Psoas muscle (tissue), 8 donors: ENCODE measurements at regions of chr17 and their contacts with region 1.

Region 1: GRCh38 chr17:46212634-46213435 is 19.6 kb upstream of the KANSL1 start:
- DNase-seq: no peak
- ATAC-seq: peak; percentile 72 to 88 (median 80)
- H3K4me3 ChIP-seq: peak overlapping the region; percentile 7
- H3K27ac ChIP-seq: peak overlapping the region; percentile 19
- H3K4me1 ChIP-seq: peaks cover 19% of the 10 kb centered on the region
- H3K27me3 ChIP-seq: no peaks in the 10 kb centered on the region
- CTCF ChIP-seq: peak; percentile 81

Region 2: DNA sequence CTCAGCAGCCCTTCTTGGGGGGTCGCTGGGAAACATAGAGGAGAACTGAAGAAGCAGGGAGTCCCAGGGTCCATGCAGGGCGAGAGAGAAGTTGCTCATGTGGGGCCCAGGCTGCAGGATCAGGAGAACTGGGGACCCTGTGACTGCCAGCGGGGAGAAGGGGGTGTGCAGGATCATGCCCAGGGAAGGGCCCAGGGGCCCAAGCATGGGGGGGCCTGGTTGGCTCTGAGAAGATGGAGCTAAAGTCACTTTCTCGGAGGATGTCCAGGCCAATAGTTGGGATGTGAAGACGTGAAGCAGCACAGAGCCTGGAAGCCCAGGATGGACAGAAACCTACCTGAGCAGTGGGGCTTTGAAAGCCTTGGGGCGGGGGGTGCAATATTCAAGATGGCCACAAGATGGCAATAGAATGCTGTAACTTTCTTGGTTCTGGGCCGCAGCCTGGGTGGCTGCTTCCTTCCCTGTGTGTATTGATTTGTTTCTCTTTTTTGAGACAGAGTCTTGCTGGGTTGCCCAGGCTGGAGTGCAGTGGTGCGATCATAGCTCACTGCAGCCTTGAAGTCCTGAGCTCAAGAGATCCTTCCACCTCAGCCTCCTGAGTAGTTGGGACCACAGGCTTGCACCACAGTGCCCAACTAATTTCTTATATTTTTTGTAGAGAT is 210.4 kb before region 1 on chr17:
- intact Hi-C with region 1: loop called (anchors 2 kb)
- DNase-seq: peak; percentile 65 to 71
- ATAC-seq: peak; percentile 77 to 89 (median 84)
- H3K4me3 ChIP-seq: no peak overlapping the region
- H3K27ac ChIP-seq: peak overlapping the region; percentile 30
- H3K4me1 ChIP-seq: peaks cover 19% of the 10 kb centered on the region
- H3K27me3 ChIP-seq: no peaks in the 10 kb centered on the region
- CTCF ChIP-seq: peak; percentile 96

Region 3: DNA sequence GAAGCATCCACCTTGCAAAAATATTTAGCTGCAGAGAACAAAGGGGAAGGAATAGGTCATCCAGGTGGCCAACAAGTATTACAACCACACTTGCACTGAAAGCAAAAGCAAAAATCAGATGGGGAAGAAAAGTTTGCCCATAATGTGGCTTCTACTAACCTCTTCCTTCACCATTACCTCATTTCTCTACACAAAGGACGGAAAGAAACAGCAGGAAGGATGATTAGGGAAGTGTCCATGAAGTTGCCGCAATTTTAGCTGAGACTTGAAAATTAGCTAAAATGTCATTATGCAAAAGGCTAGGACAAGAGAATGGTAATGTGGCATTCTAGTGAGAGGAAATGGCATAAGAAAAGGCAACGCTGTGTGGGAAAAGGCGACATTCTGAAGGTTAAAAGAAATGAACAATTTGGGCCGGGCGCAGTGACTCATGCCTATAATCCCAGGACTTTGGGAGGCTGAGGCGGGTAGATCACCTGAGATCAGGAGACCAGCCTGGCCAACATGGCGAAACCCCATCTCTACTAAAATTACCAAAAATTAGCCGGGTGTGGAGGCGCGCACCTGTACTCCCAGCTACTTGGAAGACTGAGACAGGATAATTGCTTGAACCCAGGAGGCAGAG is 33.3 kb before region 1 on chr17:
- intact Hi-C with region 1: no loop called
- DNase-seq: no peak
- ATAC-seq: no peak
- H3K4me3 ChIP-seq: no peak overlapping the region
- H3K27ac ChIP-seq: no peak overlapping the region
- H3K4me1 ChIP-seq: peaks cover 70% of the 10 kb centered on the region
- H3K27me3 ChIP-seq: no peaks in the 10 kb centered on the region
- CTCF ChIP-seq: no peak